Activated B cell treated with CpG ODN at 0.5 μM for 24 hours (primary cell): ENCODE measurements at regions of chr7 and their contacts with region 1.

Region 1: GRCh38 chr7:149846436-149847046 is 8.4 kb downstream of the ZNF862 start:
- DNase-seq: no peak
- ATAC-seq: peak; percentile 95
- H3K4me3 Mint-ChIP-seq: no peak overlapping the region
- H3K27ac Mint-ChIP-seq: peak overlapping the region; percentile 47
- H3K4me1 Mint-ChIP-seq: peaks cover 15% of the 10 kb centered on the region
- H3K27me3 Mint-ChIP-seq: no peaks in the 10 kb centered on the region
- CTCF ChIP-seq: no peak

Region 2: DNA sequence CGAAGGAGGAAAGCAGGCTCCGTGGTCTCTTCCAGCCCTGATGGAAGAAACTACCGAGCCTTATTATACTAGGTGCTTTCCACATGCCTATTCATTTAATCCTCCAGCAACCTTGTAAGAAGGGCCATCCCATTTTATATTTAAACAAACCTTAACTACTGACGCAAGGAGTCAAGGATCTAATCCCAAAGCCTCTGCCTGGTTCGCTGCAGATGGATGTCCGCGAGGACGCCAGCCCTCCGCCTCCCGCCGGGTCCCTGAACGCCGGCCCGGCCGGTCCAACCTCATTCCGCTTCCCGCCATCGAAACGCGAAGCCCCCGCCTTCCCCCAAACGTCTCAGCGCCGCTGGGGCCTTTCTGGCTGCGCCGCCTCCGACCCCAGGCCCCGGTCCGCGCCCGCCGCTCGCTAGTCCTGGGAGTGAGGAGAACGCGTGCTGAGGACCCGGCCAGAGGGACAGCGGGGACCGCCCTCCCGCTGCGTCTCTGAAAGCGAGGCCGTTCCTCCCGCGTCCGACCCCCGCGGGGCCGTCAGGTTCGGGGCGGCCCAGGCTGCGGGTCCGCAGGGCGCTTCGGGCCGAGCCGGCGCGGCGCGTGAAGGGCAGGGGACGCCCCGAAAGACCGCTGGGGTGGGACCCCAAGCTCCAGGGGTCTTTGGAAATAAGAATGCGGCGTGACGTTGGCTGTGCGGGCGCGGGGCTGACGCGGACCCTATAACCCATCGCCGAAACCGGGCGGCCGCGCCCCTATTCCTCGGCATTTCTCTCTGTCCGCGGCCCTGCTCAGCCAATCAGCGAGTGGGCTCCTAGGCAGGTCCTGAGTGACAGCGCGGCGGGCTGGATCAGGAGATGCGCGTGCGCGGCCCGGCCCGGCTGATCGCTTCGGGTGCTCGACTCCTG is 26.8 kb after region 1 on chr7 and contains the start of gene ATP6V0E2:
- CTCF ChIA-PET with region 1: interaction called, 3 read pairs
- POLR2A ChIA-PET with region 1: interaction called, 5 read pairs
- intact Hi-C with region 1: loop called (anchors 1 kb)
- DNase-seq: peak; percentile 86
- ATAC-seq: peak; percentile 95
- H3K4me3 Mint-ChIP-seq: peak within 1 kb of the TSS; percentile 86
- H3K27ac Mint-ChIP-seq: peak within 1 kb of the TSS; percentile 53
- H3K4me1 Mint-ChIP-seq: peaks cover 42% of the 10 kb centered on the region
- H3K27me3 Mint-ChIP-seq: no peaks in the 10 kb centered on the region
- CTCF ChIP-seq: no peak
- total RNA-seq, gene ATP6V0E2: 9.1 and 10.4 TPM in 2 replicates